OCI-LY7 (cell line): ENCODE measurements at regions of chr16 and their contacts with region 1.

Region 1: GRCh38 chr16:56623637-56624036 is 1.9 kb upstream of the MT1E start:
- DNase-seq: no peak
- H3K4me3 ChIP-seq: no peak overlapping the region
- H3K27ac ChIP-seq: no peak overlapping the region
- H3K4me1 ChIP-seq: peaks cover 4% of the 10 kb centered on the region
- CTCF ChIP-seq: no peak

Region 2: DNA sequence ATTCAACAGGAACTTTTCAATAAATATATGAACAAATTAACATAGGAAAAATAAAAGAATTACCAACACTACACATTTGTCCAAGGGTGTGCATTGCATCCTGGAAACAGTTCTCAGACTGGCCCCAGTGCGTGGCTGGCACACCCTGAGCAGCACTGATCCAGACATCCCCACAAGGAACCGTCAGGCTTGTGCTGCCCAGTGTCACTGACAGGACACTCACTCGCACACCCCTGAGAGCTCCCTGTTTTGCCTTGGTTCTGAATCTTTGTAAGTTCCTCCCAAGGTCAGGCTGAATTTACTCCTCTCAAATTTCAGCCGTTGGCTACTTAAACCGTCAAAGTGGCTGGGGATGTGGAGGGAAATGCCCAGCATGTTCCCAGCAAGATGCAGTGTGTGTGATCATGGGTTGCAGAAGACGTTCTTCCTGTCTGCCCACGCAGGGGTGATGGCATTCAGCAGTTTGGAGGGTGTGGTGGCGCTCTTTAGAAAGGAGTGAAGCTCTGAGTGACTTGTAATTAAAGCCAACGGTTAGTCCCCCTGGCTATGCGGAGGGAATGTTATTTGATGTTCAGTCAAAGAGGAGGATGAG is 13.5 kb before region 1 on chr16:
- CTCF ChIA-PET with region 1: no interaction called
- POLR2A ChIA-PET with region 1: interaction called, 11 read pairs
- intact Hi-C with region 1: no loop called
- DNase-seq: peak; percentile 32
- H3K4me3 ChIP-seq: peak overlapping the region; percentile 66
- H3K27ac ChIP-seq: peak overlapping the region; percentile 5
- H3K4me1 ChIP-seq: peaks cover 52% of the 10 kb centered on the region
- CTCF ChIP-seq: peak; percentile 40; the same call in 1 of the 2 replicates